ENCODE measurements at regions of chr1 and their contacts with region 1.

Region 1: GRCh38 chr1:151156515-151156819 is at the start of gene TNFAIP8L2:
- DNase-seq: no peak

Region 2: DNA sequence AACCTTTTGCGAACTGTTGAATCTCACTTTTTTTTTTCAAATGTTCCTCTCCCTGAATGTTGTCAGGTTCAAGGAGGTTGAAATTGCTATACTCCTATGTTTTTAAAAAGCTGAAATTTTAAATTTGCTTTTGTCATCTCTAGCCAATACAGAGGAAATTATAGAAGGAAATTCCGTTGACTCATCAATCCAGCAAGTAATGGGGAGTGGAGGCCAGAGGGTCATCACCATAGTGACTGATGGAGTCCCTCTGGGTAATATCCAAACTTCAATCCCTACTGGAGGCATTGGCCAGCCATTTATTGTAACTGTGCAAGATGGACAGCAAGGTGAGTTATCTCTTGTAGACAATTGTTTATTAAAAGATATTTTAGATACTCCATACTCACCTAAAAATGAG is 49.6 kb before region 1 on chr1:
- CTCF ChIA-PET with region 1: interaction called, 51 read pairs
- POLR2A ChIA-PET with region 1: interaction called, 3 read pairs
- DNase-seq: no peak

Measured in HEK293T (cell line).